CD14-positive monocyte (primary cell): ENCODE measurements at regions of chr3 and their contacts with region 1.

Region 1: GRCh38 chr3:134496471-134497071 is 10.7 kb downstream of the CEP63 start:
- DNase-seq: no peak
- H3K4me3 ChIP-seq: no peak overlapping the region
- H3K4me3 Mint-ChIP-seq: no peak overlapping the region
- H3K27ac ChIP-seq: no peak overlapping the region
- H3K27ac Mint-ChIP-seq: peak overlapping the region in 3 of 7 donors; percentile 29 to 70 (median 51)
- H3K4me1 ChIP-seq: peaks cover 0 to 6% of the 10 kb centered on the region in 2 donors
- H3K4me1 Mint-ChIP-seq: peaks cover 18% of the 10 kb centered on the region
- H3K27me3 ChIP-seq: no peaks in the 10 kb centered on the region
- H3K27me3 Mint-ChIP-seq: no peaks in the 10 kb centered on the region
- CTCF ChIP-seq: no peak

Region 2: GRCh38 chr3:134308350-134308891 is 188.2 kb before region 1 on chr3:
- intact Hi-C with region 1: loop called in 1 of 2 experiments (anchors 5 kb)
- DNase-seq: peak; percentile 42 to 66 (median 63)
- H3K4me3 ChIP-seq: no peak overlapping the region
- H3K4me3 Mint-ChIP-seq: no peak overlapping the region
- H3K27ac ChIP-seq: no peak overlapping the region
- H3K27ac Mint-ChIP-seq: no peak overlapping the region
- H3K4me1 ChIP-seq: peaks cover 6 to 10% of the 10 kb centered on the region in 2 donors
- H3K4me1 Mint-ChIP-seq: peaks cover 11% of the 10 kb centered on the region
- H3K27me3 ChIP-seq: peaks cover 5 to 26% of the 10 kb centered on the region in 2 donors
- H3K27me3 Mint-ChIP-seq: peaks cover 21 to 50% (median 34%) of the 10 kb centered on the region in 3 donors
- CTCF ChIP-seq: peak; percentile 98